Motor neuron (in vitro differentiated cells): ENCODE measurements at regions of chr17 and their contacts with region 1.

Region 1: GRCh38 chr17:21772321-21772720 is 80.0 kb downstream of the KCNJ18 start:
- ATAC-seq: no peak
- H3K4me3 ChIP-seq: no peak overlapping the region
- H3K27ac ChIP-seq: no peak overlapping the region
- H3K4me1 ChIP-seq: no peaks in the 10 kb centered on the region

Region 2: DNA sequence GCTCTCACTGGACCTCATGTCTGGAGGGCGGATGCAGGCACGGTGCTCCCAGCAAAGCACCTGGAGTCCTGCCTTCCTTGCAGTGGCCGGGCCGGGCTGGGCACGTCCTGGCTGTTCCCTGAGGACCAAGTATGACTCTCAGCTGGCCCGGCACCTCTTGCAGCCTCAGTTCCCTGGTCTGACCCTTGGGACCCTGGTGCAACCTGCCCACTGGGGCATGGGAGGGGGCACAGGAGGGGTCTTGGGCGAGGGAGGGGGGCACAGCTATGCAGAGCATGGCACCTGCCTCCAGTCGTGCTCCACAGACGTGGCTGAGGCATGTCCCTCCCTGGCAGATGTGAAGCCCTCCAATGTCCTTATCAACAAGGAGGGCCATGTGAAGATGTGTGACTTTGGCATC is 468.2 kb before region 1 on chr17:
- in situ Hi-C with region 1: loop called in 2 of 9 experiments (anchors 25 kb)
- ATAC-seq: peak in 2 of 8 experiments; percentile 6 to 8
- H3K4me3 ChIP-seq: no peak overlapping the region
- H3K27ac ChIP-seq: no peak overlapping the region
- H3K4me1 ChIP-seq: no peaks in the 10 kb centered on the region